AG04449 (cell line): ENCODE measurements at regions of chr11 and their contacts with region 1.

Region 1: GRCh38 chr11:82775736-82776346 is 42.2 kb upstream of the FAM181B start:
- DNase-seq: no peak
- H3K4me3 ChIP-seq: no peak overlapping the region
- CTCF ChIP-seq: peak; percentile 81

Region 2: DNA sequence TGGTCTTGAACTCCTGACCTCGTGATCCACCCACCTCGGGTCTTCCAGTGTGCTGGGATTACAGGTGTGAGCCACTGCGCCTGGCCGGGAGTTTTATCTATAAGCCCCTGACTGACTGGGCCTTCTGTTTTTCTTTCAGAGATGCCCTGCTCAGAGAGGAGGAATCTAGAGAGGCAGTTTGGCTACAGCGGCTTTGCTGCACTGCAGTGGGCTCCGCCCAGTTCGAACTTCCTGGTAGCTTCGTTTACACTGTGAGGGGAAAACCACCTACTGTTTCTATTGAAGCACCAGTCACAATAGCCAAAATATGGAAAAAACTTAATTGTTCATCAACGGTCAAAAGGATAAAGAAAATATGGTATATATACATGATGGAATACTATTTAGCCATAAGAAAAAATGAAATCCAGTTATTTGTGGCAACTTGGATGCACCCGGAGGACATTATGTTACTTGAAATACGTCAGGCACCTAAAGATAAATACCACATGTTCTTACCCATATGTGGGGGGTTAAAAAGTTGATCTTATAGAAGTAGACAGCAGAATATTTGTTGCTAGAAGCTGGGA is 10.3 kb before region 1 on chr11:
- CTCF ChIA-PET with region 1: interaction called, 14 read pairs
- POLR2A ChIA-PET with region 1: no interaction called
- DNase-seq: no peak
- H3K4me3 ChIP-seq: no peak overlapping the region
- CTCF ChIP-seq: no peak

Region 3: GRCh38 chr11:82787981-82788380 is 12.1 kb after region 1 on chr11:
- CTCF ChIA-PET with region 1: interaction called, 17 read pairs
- POLR2A ChIA-PET with region 1: no interaction called
- DNase-seq: no peak
- H3K4me3 ChIP-seq: no peak overlapping the region
- CTCF ChIP-seq: no peak

Region 4: GRCh38 chr11:82858556-82859091 is 82.8 kb after region 1 on chr11:
- CTCF ChIA-PET with region 1: interaction called, 18 read pairs
- POLR2A ChIA-PET with region 1: no interaction called
- DNase-seq: peak; percentile 49
- H3K4me3 ChIP-seq: no peak overlapping the region
- CTCF ChIP-seq: no peak

Region 5: DNA sequence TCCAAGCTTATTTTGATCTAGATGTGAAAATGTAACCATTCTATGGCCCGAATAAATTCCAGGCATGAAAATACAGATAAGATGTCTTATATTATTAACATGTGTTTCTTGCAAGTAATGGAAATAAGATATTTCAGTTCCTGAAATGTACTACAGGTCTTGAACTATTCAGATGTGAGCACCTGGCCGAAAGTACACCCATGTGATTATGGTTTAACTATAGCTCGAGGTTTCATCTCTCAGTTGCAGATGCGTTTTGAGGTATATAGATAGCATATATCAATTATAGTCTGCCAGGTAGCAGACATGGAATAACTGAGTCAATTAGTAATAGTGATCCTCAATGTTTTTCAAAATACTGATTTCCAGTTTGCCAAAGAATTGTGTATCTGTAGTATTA is 194.0 kb after region 1 on chr11:
- CTCF ChIA-PET with region 1: no interaction called
- POLR2A ChIA-PET with region 1: no interaction called
- DNase-seq: no peak
- H3K4me3 ChIP-seq: no peak overlapping the region
- CTCF ChIP-seq: no peak

Region 6: DNA sequence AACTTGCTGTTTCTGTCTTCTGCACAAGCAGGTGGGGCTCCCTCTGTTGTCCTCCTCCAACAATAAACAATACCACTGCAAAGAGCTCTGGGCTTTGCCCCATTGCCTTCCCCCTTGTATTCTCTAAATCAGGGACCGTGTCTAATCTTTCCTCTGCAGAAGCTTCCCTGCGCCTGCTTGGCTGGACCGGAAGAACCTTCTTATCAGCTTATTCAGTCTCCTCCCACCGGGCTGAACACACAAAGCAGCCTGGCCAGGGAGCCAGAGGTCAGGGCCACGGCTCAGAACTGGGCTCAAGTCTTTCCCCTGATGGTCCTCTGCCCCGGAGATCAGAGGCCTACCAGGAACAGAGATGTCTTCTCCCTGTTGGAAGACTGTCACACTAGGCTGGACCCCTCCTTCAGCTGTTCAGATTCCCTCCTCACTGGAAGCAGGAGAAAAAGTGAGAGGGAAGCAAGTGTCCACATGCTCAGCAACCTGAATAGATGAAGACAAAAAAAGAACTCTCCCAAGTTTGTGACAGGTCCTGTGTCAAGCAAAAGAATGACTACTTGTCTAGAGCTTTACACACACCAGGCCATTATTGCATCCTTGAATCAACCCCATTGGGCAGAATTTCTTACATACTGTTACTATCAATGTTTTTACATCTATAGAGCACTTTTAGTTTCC is 232.2 kb after region 1 on chr11:
- CTCF ChIA-PET with region 1: no interaction called
- POLR2A ChIA-PET with region 1: no interaction called
- DNase-seq: no peak
- H3K4me3 ChIP-seq: no peak overlapping the region
- CTCF ChIP-seq: no peak